Heart right ventricle (tissue), 16 donors: ENCODE measurements at regions of chr1 and their contacts with region 1.

Region 1: GRCh38 chr1:59378621-59379370 is 81.9 kb downstream of the FGGY start:
- DNase-seq: no peak
- ATAC-seq: no peak
- H3K4me3 ChIP-seq: no peak overlapping the region
- H3K27ac ChIP-seq: no peak overlapping the region
- H3K4me1 ChIP-seq: peaks cover 0 to 6% (median 0%) of the 10 kb centered on the region in 9 donors
- H3K27me3 ChIP-seq: no peaks in the 10 kb centered on the region
- CTCF ChIP-seq: no peak

Region 2: DNA sequence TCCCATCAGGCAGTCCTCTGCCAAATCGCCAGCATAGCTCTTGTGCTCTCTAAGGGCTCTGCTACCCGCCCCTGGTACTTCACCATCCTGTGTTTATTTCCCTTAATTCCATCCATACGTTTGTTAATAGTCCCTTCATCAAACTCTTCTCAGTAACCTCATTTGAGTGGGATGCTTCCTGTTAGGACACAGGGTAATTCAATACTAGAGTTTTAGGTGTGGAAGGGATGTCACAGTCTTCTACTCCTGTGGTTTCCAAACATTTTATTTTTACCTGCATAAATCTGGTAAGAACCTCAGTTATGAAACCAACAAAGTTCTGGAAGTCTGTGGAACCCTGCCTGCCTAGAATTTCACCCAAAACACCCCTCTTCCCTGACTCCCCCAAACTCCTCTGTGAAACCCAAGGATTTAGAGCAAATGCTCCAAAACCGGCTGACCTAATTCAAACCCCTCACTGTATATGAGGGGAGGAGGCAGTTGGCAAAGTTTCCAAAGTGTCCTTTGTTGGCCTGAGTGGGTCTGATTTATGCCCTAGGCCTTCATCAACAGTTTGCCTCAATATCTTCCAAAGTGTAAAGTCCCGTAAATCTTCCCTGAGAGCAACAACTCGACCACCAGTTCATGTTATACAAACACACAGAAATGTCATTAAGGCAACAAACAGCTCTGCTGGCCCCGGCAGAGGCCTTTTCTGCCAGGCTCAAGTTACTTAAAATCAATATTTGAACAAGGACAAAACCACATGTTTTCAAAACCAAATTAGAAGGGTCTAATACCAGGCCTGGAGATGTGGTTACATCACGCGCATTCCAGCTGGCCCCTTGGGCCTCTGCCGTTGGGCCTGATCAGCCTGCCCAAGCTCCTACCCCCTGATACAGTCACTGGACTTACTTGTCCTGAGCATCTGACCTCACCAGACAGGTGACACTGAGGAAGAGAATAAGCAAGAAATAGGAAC is 164.3 kb before region 1 on chr1:
- intact Hi-C with region 1: no loop called
- DNase-seq: no peak
- ATAC-seq: no peak
- H3K4me3 ChIP-seq: no peak overlapping the region
- H3K27ac ChIP-seq: no peak overlapping the region
- H3K4me1 ChIP-seq: no peaks in the 10 kb centered on the region
- H3K27me3 ChIP-seq: no peaks in the 10 kb centered on the region
- CTCF ChIP-seq: no peak

Region 3: GRCh38 chr1:59342801-59343575 is 35.8 kb before region 1 on chr1:
- intact Hi-C with region 1: loop called in 1 of 10 experiments (anchors 1 kb)
- DNase-seq: no peak
- ATAC-seq: no peak
- H3K4me3 ChIP-seq: no peak overlapping the region
- H3K27ac ChIP-seq: no peak overlapping the region
- H3K4me1 ChIP-seq: no peaks in the 10 kb centered on the region
- H3K27me3 ChIP-seq: no peaks in the 10 kb centered on the region
- CTCF ChIP-seq: no peak

Region 4: GRCh38 chr1:59619557-59619956 is 240.8 kb after region 1 on chr1:
- intact Hi-C with region 1: no loop called
- DNase-seq: no peak
- ATAC-seq: no peak
- H3K4me3 ChIP-seq: no peak overlapping the region
- H3K27ac ChIP-seq: no peak overlapping the region
- H3K4me1 ChIP-seq: no peaks in the 10 kb centered on the region
- H3K27me3 ChIP-seq: no peaks in the 10 kb centered on the region
- CTCF ChIP-seq: no peak